Naive thymus-derived CD4-positive, alpha-beta T cell (primary cell): ENCODE measurements at regions of chr1 and their contacts with region 1.

Region 1: GRCh38 chr1:43171876-43172526 is at the starts of genes CFAP57 and EBNA1BP2:
- DNase-seq: peak; percentile 78 to 95 (median 92)
- ATAC-seq: peak; percentile 82
- H3K4me3 ChIP-seq: peak within 1 kb of the TSS; percentile 95
- H3K4me3 Mint-ChIP-seq: peak within 1 kb of the TSS; percentile 90 to 100 (median 99)
- H3K27ac ChIP-seq: peak within 1 kb of the TSS; percentile 74
- H3K27ac Mint-ChIP-seq: peak within 1 kb of the TSS; percentile 89 to 98 (median 95)
- H3K4me1 ChIP-seq: peaks cover 10 to 13% of the 10 kb centered on the region in 2 donors
- H3K4me1 Mint-ChIP-seq: peaks cover 14 to 49% (median 33%) of the 10 kb centered on the region in 7 donors
- H3K27me3 ChIP-seq: peaks cover 0 to 3% of the 10 kb centered on the region in 2 donors
- H3K27me3 Mint-ChIP-seq: peaks cover 14 to 25% (median 19%) of the 10 kb centered on the region in 5 donors
- total RNA-seq, gene CFAP57: 0.07 TPM in 1 of 5 experiments, not detected in the others
- total RNA-seq, gene EBNA1BP2: 17.8 to 46.1 (median 22.7) TPM

Region 2: GRCh38 chr1:42335050-42335808 is 836.8 kb before region 1 on chr1 and contains the start of gene FOXJ3:
- CTCF ChIA-PET with region 1: no interaction called
- POLR2A ChIA-PET with region 1: no interaction called
- intact Hi-C with region 1: loop called in 1 of 2 experiments (anchors 1 kb)
- DNase-seq: peak; percentile 83 to 93 (median 91)
- ATAC-seq: peak; percentile 96
- H3K4me3 ChIP-seq: peak within 1 kb of the TSS; percentile 94
- H3K4me3 Mint-ChIP-seq: peak within 1 kb of the TSS; percentile 84 to 96 (median 94)
- H3K27ac ChIP-seq: peak within 1 kb of the TSS; percentile 90
- H3K27ac Mint-ChIP-seq: peak within 1 kb of the TSS; percentile 83 to 97 (median 92)
- H3K4me1 ChIP-seq: peaks cover 16 to 19% of the 10 kb centered on the region in 2 donors
- H3K4me1 Mint-ChIP-seq: peaks cover 42 to 65% (median 56%) of the 10 kb centered on the region in 7 donors
- H3K27me3 ChIP-seq: no peaks in the 10 kb centered on the region
- H3K27me3 Mint-ChIP-seq: peaks cover 0 to 3% (median 0%) of the 10 kb centered on the region in 5 donors
- total RNA-seq, gene FOXJ3: 59.5 to 93.3 (median 76.5) TPM

Region 3: DNA sequence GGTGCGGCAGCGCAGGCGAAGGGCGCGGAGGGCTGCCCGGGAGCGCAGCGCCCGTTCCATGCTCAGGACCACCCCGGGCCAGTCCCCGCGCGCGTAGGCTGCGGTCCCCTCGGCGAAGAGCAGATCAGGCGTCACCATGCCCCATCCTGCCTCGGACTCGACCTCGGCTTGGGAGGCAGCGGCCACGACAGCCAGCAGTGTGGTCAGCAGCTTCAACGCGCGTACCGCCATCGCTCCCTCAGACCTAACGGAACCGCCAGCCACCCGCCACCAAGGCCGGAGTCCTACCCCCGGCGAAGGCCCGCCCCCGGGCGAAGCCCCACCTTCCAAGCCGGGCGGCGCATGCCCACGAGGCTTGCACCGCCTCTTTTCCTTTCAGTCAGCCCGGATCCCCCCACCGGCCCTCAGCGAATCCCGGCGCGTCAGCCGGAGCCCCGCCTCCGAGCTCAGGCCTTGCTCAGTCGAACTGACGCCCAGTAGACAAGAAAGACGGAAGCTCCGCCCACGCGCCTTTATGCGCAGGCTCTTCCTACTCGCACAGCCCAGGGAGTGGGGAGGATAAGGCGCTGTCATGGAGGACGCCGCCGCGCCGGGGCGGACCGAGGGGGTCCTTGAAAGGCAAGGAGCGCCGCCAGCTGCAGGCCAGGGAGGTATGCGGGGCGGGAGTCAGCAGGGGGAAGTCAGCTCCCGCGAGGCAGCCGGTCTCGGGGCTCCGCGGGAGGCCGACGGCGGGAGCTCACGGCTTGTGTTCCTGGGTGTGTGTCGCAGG is 405.1 kb before region 1 on chr1 and contains the starts of genes C1orf50 and P3H1:
- CTCF ChIA-PET with region 1: no interaction called
- POLR2A ChIA-PET with region 1: no interaction called
- intact Hi-C with region 1: loop called (anchors 1 kb)
- DNase-seq: peak; percentile 98 to 100 (median 100)
- ATAC-seq: peak; percentile 96
- H3K4me3 ChIP-seq: peak within 1 kb of the TSS; percentile 91
- H3K4me3 Mint-ChIP-seq: peak within 1 kb of the TSS in 1 of 10 donors; percentile 92
- H3K27ac ChIP-seq: peak within 1 kb of the TSS; percentile 84
- H3K27ac Mint-ChIP-seq: peak within 1 kb of the TSS in 8 of 9 donors; percentile 70 to 96 (median 92)
- H3K4me1 ChIP-seq: peaks cover 25 to 35% of the 10 kb centered on the region in 2 donors
- H3K4me1 Mint-ChIP-seq: peaks cover 20 to 50% (median 32%) of the 10 kb centered on the region in 7 donors
- H3K27me3 ChIP-seq: no peaks in the 10 kb centered on the region
- H3K27me3 Mint-ChIP-seq: no peaks in the 10 kb centered on the region
- total RNA-seq, gene C1orf50: 7.0 to 20.8 (median 18.1) TPM
- total RNA-seq, gene P3H1: 32.5 to 61.8 (median 47.3) TPM

Region 4: DNA sequence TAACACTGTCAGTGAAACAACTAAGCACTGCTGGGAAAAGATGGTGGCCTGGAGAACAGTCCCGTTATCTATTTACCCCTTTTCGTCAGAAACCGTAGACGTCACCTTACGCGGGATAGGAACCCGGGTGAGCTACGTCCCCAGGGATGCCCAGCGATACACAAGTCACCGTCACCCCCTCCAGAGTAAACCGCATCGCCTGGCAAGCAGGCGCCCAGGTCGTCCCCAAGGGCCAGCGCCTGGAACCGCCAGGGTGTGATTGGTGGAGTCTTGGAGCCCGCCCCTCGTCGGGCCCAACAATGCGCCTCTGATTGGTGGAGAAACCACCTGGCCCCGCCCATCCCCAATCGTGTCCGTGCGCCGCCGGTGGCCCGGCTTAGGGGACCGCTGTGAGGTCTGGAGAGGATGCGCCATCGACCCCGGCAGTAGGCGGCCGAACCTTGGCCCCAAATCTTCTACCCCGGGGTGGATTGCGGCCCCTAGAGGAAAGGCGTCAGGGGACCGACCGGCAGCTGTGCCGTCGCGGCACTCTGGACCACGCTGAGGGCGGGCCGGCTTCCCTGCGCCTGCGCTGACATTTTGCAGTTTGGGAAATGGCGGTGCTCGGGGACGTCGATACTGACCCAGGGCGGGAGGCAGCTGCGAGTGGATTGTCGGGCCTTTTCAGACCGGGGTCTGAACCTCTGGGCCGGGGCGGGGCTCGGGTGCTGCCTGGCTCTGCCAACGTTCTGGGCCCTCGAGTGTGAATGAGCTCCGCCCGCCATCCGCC is 247.7 kb before region 1 on chr1:
- CTCF ChIA-PET with region 1: no interaction called
- POLR2A ChIA-PET with region 1: no interaction called
- intact Hi-C with region 1: loop called (anchors 1 kb)
- DNase-seq: peak; percentile 85 to 93 (median 92)
- ATAC-seq: peak; percentile 96
- H3K4me3 ChIP-seq: peak overlapping the region; percentile 99
- H3K4me3 Mint-ChIP-seq: peak overlapping the region; percentile 77 to 98 (median 92)
- H3K27ac ChIP-seq: peak overlapping the region; percentile 82
- H3K27ac Mint-ChIP-seq: peak overlapping the region; percentile 79 to 98 (median 96)
- H3K4me1 ChIP-seq: peaks cover 15 to 16% of the 10 kb centered on the region in 2 donors
- H3K4me1 Mint-ChIP-seq: peaks cover 16 to 50% (median 39%) of the 10 kb centered on the region in 7 donors
- H3K27me3 ChIP-seq: no peaks in the 10 kb centered on the region
- H3K27me3 Mint-ChIP-seq: no peaks in the 10 kb centered on the region

Region 5: GRCh38 chr1:43143441-43143888 is 28.5 kb before region 1 on chr1:
- CTCF ChIA-PET with region 1: no interaction called
- POLR2A ChIA-PET with region 1: no interaction called
- intact Hi-C with region 1: no loop called
- DNase-seq: no peak
- ATAC-seq: no peak
- H3K4me3 ChIP-seq: no peak overlapping the region
- H3K4me3 Mint-ChIP-seq: no peak overlapping the region
- H3K27ac ChIP-seq: no peak overlapping the region
- H3K27ac Mint-ChIP-seq: no peak overlapping the region
- H3K4me1 ChIP-seq: no peaks in the 10 kb centered on the region
- H3K4me1 Mint-ChIP-seq: peaks cover 0 to 8% (median 2%) of the 10 kb centered on the region in 7 donors
- H3K27me3 ChIP-seq: peaks cover 0 to 11% of the 10 kb centered on the region in 2 donors
- H3K27me3 Mint-ChIP-seq: peaks cover 61 to 72% (median 62%) of the 10 kb centered on the region in 5 donors

Region 6: GRCh38 chr1:43367904-43368645 is 196.1 kb after region 1 on chr1 and contains the start of gene ELOVL1:
- CTCF ChIA-PET with region 1: no interaction called
- POLR2A ChIA-PET with region 1: interaction called, 3 read pairs
- intact Hi-C with region 1: loop called in 1 of 2 experiments (anchors 1 kb)
- DNase-seq: peak; percentile 40 to 94 (median 58)
- ATAC-seq: peak; percentile 91
- H3K4me3 ChIP-seq: peak within 1 kb of the TSS; percentile 89
- H3K4me3 Mint-ChIP-seq: peak within 1 kb of the TSS; percentile 86 to 97 (median 92)
- H3K27ac ChIP-seq: peak within 1 kb of the TSS; percentile 90
- H3K27ac Mint-ChIP-seq: peak within 1 kb of the TSS; percentile 88 to 95 (median 91)
- H3K4me1 ChIP-seq: peaks cover 13 to 22% of the 10 kb centered on the region in 2 donors
- H3K4me1 Mint-ChIP-seq: peaks cover 24 to 47% (median 42%) of the 10 kb centered on the region in 7 donors
- H3K27me3 ChIP-seq: no peaks in the 10 kb centered on the region
- H3K27me3 Mint-ChIP-seq: no peaks in the 10 kb centered on the region
- total RNA-seq, gene ELOVL1: 25.9 to 65.3 (median 32.3) TPM

Region 7: GRCh38 chr1:43650310-43651085 is 478.5 kb after region 1 on chr1:
- CTCF ChIA-PET with region 1: no interaction called
- POLR2A ChIA-PET with region 1: no interaction called
- intact Hi-C with region 1: loop called in 1 of 2 experiments (anchors 2 kb)
- DNase-seq: peak in 8 of 9 donors; percentile 70 to 93 (median 90)
- ATAC-seq: peak; percentile 83
- H3K4me3 ChIP-seq: peak overlapping the region; percentile 96
- H3K4me3 Mint-ChIP-seq: peak overlapping the region; percentile 93 to 99 (median 96)
- H3K27ac ChIP-seq: peak overlapping the region; percentile 86
- H3K27ac Mint-ChIP-seq: peak overlapping the region; percentile 85 to 98 (median 95)
- H3K4me1 ChIP-seq: peaks cover 10 to 16% of the 10 kb centered on the region in 2 donors
- H3K4me1 Mint-ChIP-seq: peaks cover 27 to 47% (median 37%) of the 10 kb centered on the region in 7 donors
- H3K27me3 ChIP-seq: no peaks in the 10 kb centered on the region
- H3K27me3 Mint-ChIP-seq: peaks cover 0 to 5% (median 0%) of the 10 kb centered on the region in 5 donors

Region 8: DNA sequence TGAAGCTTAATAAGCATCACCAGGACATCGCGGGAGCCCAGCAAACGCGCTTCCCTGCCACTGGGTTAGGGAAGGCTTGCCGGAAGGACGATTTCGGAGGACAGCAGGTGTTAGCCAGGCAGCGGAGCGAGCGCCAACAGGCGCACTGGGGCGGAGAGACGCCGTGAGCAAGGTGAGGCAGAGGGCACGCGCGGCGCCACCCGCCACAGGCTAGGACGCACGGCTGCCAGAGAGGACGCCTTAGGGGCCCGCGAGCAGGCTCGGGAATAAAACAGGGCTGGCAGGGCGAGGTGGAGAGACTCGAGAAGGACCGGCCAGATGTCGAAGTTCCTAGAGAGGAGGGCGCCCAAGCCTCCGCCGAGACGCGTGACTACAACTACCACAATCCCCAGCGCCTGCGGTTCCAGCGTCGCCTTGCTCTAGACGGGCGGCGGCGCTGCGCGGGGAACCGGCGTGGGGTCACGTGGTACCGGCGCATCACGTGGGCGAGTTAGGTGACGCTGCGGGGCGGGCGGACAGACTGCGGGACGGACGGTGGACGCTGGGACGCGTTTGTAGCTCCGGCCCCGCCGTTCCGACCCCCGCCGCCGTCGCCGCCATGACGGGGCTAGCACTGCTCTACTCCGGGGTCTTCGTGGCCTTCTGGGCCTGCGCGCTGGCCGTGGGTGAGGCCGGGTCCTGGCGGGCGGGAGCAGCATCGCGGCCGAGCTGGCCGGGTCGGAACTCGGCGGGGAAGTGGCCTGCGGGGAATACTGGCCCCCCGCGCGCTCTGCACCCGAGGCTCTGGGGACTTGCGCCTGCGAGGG is 802.6 kb after region 1 on chr1 and contains the start of gene ATP6V0B:
- CTCF ChIA-PET with region 1: no interaction called
- POLR2A ChIA-PET with region 1: no interaction called
- intact Hi-C with region 1: loop called in 1 of 2 experiments (anchors 1 kb)
- DNase-seq: peak; percentile 83 to 98 (median 90)
- ATAC-seq: peak; percentile 85
- H3K4me3 ChIP-seq: peak within 1 kb of the TSS; percentile 93
- H3K4me3 Mint-ChIP-seq: peak within 1 kb of the TSS; percentile 88 to 98 (median 94)
- H3K27ac ChIP-seq: peak within 1 kb of the TSS; percentile 91
- H3K27ac Mint-ChIP-seq: peak within 1 kb of the TSS; percentile 90 to 99 (median 94)
- H3K4me1 ChIP-seq: peaks cover 27 to 29% of the 10 kb centered on the region in 2 donors
- H3K4me1 Mint-ChIP-seq: peaks cover 51 to 69% (median 58%) of the 10 kb centered on the region in 7 donors
- H3K27me3 ChIP-seq: no peaks in the 10 kb centered on the region
- H3K27me3 Mint-ChIP-seq: peaks cover 0 to 5% (median 0%) of the 10 kb centered on the region in 5 donors
- total RNA-seq, gene ATP6V0B: 47.3 to 152 (median 69.3) TPM